Panc1 (cell line): ENCODE measurements at regions of chr12 and their contacts with region 1.

Region 1: DNA sequence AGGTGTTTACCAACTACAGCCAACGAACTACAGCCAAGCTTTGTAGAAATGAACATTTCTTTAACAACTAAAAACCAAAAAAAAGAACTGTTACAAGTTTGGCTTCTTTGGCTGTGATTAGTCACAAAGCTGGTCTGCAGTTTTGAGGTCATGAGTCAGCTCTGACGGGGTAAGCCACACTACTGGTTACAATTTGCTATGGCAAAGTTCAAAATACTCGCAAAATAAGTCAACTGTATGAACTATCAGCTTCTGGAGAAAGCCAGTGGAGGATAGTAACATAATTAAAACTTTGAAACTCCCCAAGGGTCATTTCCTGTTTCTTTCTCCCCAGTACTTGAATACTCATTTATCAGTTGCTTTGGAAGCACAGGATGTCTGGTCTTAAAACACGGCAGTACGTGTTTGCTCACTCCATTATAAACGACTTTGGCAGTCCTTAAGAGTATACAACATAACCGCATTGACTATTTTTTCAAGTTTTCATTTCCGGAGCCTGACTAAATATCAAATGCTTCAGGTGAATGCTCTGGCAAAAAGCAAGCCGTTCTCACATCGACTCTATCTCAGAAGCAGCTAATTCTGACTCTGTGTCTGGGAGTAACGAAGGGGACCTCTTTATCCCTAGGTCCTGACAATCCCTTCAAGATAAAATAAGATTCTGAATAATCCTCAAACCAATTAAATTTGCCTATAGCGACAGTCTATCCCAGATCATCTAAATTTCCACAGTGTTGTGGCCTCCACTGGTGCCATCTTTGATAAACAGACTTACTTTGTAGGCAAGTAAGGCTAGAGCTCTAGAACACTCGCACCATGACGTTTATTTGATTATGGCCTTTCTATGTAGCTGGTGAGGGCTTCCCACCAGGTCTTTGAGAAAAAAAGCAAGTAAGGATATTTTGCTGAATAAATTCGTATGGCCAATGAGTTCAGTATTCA is 10.6 kb downstream of the PHLDA1 start:
- DNase-seq: no peak
- ATAC-seq: peak; percentile 76
- H3K4me3 ChIP-seq: no peak overlapping the region
- H3K27ac ChIP-seq: peak overlapping the region; percentile 100
- H3K4me1 ChIP-seq: peaks cover 75% of the 10 kb centered on the region
- H3K27me3 ChIP-seq: no peaks in the 10 kb centered on the region
- CTCF ChIP-seq: no peak

Region 2: GRCh38 chr12:75526655-75527511 is 494.1 kb before region 1 on chr12:
- CTCF ChIA-PET with region 1: interaction called, 4 read pairs
- POLR2A ChIA-PET with region 1: interaction called, 11 read pairs
- in situ Hi-C with region 1: no loop called
- intact Hi-C with region 1: loop called (anchors 5 kb)
- DNase-seq: no peak
- ATAC-seq: peak; percentile 92
- H3K4me3 ChIP-seq: no peak overlapping the region
- H3K27ac ChIP-seq: peak overlapping the region; percentile 78
- H3K4me1 ChIP-seq: peaks cover 13% of the 10 kb centered on the region
- H3K27me3 ChIP-seq: no peaks in the 10 kb centered on the region
- CTCF ChIP-seq: peak; percentile 71

Region 3: DNA sequence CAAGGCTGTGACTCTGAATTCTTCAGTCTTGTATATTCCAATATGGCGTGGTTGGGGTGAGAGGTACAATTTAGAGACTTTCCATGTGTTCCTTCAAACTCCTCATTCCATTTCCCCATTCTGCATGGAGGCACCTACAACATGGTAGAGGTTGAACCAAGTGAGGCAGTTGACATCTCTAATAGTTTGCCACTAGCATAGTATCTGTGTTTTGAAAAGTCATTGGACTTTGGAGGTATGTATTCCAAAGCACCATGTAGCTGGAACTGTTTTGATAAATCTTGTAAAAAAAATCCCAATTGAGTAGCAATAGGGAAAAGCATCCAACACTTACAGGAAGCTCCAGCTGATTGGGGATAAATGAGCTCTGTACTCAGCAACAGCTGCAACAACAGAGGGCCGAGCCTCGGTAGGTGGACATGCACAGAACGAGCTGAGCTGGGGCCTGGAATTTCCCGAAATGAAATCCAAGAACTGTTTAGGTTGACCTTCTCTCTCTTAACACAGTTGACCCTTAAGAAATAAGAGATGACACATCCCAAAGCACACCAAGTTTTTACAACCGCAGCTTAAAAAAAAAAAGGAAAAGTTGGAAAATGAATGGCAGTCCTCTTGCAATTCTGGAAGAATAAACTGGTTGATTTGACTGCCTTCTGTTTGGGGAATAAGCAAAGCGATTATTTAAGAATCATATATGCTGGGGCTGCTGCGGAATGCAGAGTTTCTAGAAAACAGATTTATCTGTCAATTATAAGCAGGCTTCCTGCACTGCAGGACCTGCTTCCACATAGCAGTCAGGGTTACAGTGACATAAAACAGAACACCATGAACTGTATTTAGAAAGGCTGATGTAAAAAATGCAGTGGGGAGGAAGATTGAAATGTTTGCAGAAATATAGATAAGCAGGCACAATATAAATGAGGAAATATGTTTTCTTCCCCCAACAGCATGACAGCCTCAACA is 315.0 kb before region 1 on chr12:
- CTCF ChIA-PET with region 1: no interaction called
- POLR2A ChIA-PET with region 1: interaction called, 4 read pairs
- in situ Hi-C with region 1: no loop called
- intact Hi-C with region 1: loop called (anchors 2 kb)
- DNase-seq: no peak
- ATAC-seq: peak; percentile 96
- H3K4me3 ChIP-seq: no peak overlapping the region
- H3K27ac ChIP-seq: peak overlapping the region; percentile 100
- H3K4me1 ChIP-seq: peaks cover 50% of the 10 kb centered on the region
- H3K27me3 ChIP-seq: no peaks in the 10 kb centered on the region
- CTCF ChIP-seq: no peak

Region 4: GRCh38 chr12:75913502-75914351 is 107.3 kb before region 1 on chr12:
- CTCF ChIA-PET with region 1: no interaction called
- POLR2A ChIA-PET with region 1: no interaction called
- in situ Hi-C with region 1: no loop called
- intact Hi-C with region 1: loop called (anchors 10 kb)
- DNase-seq: no peak
- ATAC-seq: peak; percentile 3; the same call in 1 of the 2 replicates
- H3K4me3 ChIP-seq: no peak overlapping the region
- H3K27ac ChIP-seq: peak overlapping the region; percentile 96
- H3K4me1 ChIP-seq: peaks cover 24% of the 10 kb centered on the region
- H3K27me3 ChIP-seq: no peaks in the 10 kb centered on the region
- CTCF ChIP-seq: no peak

Region 5: GRCh38 chr12:75977952-75978671 is 42.9 kb before region 1 on chr12:
- CTCF ChIA-PET with region 1: no interaction called
- POLR2A ChIA-PET with region 1: interaction called, 4 read pairs
- in situ Hi-C with region 1: no loop called
- intact Hi-C with region 1: loop called (anchors 5 kb)
- DNase-seq: peak; percentile 98
- ATAC-seq: peak; percentile 91
- H3K4me3 ChIP-seq: no peak overlapping the region
- H3K27ac ChIP-seq: peak overlapping the region; percentile 99
- H3K4me1 ChIP-seq: peaks cover 63% of the 10 kb centered on the region
- H3K27me3 ChIP-seq: no peaks in the 10 kb centered on the region
- CTCF ChIP-seq: no peak